CD14-positive monocyte (primary cell): ENCODE measurements at regions of chr12 and their contacts with region 1.

Region 1: GRCh38 chr12:56224102-56224701 is at the start of gene NABP2:
- DNase-seq: peak; percentile 87 to 96 (median 95)
- H3K4me3 ChIP-seq: peak within 1 kb of the TSS; percentile 40 to 96 (median 40)
- H3K4me3 Mint-ChIP-seq: peak within 1 kb of the TSS; percentile 76 to 85
- H3K27ac ChIP-seq: peak within 1 kb of the TSS in 1 of 2 donors; percentile 94
- H3K27ac Mint-ChIP-seq: peak within 1 kb of the TSS; percentile 89 to 99 (median 92)
- H3K4me1 ChIP-seq: peaks cover 44 to 48% of the 10 kb centered on the region in 2 donors
- H3K4me1 Mint-ChIP-seq: peaks cover 42% of the 10 kb centered on the region
- H3K27me3 ChIP-seq: no peaks in the 10 kb centered on the region
- H3K27me3 Mint-ChIP-seq: no peaks in the 10 kb centered on the region
- CTCF ChIP-seq: peak; percentile 90
- polyA plus RNA-seq, gene NABP2: 2.7 to 10.1 (median 3.2) TPM

Region 2: GRCh38 chr12:56158029-56158925 is 65.9 kb before region 1 on chr12 and contains the start of gene MYL6:
- intact Hi-C with region 1: loop called in 1 of 2 experiments (anchors 2 kb)
- DNase-seq: peak; percentile 94 to 98 (median 97)
- H3K4me3 ChIP-seq: peak within 1 kb of the TSS; percentile 77 to 96 (median 84)
- H3K4me3 Mint-ChIP-seq: peak within 1 kb of the TSS; percentile 97 to 99
- H3K27ac ChIP-seq: peak within 1 kb of the TSS; percentile 90 to 94
- H3K27ac Mint-ChIP-seq: peak within 1 kb of the TSS; percentile 97 to 99 (median 98)
- H3K4me1 ChIP-seq: peaks cover 35 to 44% of the 10 kb centered on the region in 2 donors
- H3K4me1 Mint-ChIP-seq: peaks cover 38% of the 10 kb centered on the region
- H3K27me3 ChIP-seq: no peaks in the 10 kb centered on the region
- H3K27me3 Mint-ChIP-seq: peaks cover 0 to 3% (median 2%) of the 10 kb centered on the region in 3 donors
- CTCF ChIP-seq: no peak
- polyA plus RNA-seq, gene MYL6: 1,962 to 3,939 (median 3,189) TPM

Region 3: DNA sequence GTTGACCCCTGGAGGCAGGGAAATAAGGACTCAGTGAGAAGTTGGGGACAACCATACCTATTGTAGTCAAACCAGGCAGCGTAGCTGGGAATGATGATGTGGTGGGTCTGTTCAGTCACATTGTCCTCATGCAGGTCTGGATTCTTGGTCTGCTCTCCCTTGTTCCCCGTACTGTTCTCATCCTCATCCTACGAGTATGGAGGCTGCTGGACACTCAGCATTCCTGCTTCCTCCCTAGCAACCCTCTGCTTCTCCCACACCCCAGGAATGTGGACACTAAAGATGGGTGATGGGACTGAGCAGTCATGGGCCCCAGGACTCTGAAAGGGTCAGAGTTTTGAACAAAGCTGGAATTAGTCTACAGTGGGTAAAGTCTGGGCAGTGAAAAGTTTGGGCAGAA is 45.9 kb before region 1 on chr12:
- intact Hi-C with region 1: no loop called
- DNase-seq: no peak
- H3K4me3 ChIP-seq: no peak overlapping the region
- H3K4me3 Mint-ChIP-seq: no peak overlapping the region
- H3K27ac ChIP-seq: no peak overlapping the region
- H3K27ac Mint-ChIP-seq: peak overlapping the region in 1 of 7 donors; percentile 15
- H3K4me1 ChIP-seq: peaks cover 13 to 14% of the 10 kb centered on the region in 2 donors
- H3K4me1 Mint-ChIP-seq: peaks cover 16% of the 10 kb centered on the region
- H3K27me3 ChIP-seq: no peaks in the 10 kb centered on the region
- H3K27me3 Mint-ChIP-seq: no peaks in the 10 kb centered on the region
- CTCF ChIP-seq: no peak

Region 4: GRCh38 chr12:56299853-56300643 is 75.8 kb after region 1 on chr12 and contains the start of gene CS:
- intact Hi-C with region 1: no loop called
- DNase-seq: peak; percentile 97 to 98 (median 98)
- H3K4me3 ChIP-seq: peak within 1 kb of the TSS; percentile 61 to 84 (median 66)
- H3K4me3 Mint-ChIP-seq: peak within 1 kb of the TSS; percentile 93 to 98
- H3K27ac ChIP-seq: peak within 1 kb of the TSS; percentile 84 to 95
- H3K27ac Mint-ChIP-seq: peak within 1 kb of the TSS; percentile 94 to 97 (median 97)
- H3K4me1 ChIP-seq: peaks cover 41 to 49% of the 10 kb centered on the region in 2 donors
- H3K4me1 Mint-ChIP-seq: peaks cover 50% of the 10 kb centered on the region
- H3K27me3 ChIP-seq: no peaks in the 10 kb centered on the region
- H3K27me3 Mint-ChIP-seq: peaks cover 0 to 2% (median 0%) of the 10 kb centered on the region in 3 donors
- CTCF ChIP-seq: no peak
- polyA plus RNA-seq, gene CS: 55.7 to 156 (median 86.1) TPM

Region 5: DNA sequence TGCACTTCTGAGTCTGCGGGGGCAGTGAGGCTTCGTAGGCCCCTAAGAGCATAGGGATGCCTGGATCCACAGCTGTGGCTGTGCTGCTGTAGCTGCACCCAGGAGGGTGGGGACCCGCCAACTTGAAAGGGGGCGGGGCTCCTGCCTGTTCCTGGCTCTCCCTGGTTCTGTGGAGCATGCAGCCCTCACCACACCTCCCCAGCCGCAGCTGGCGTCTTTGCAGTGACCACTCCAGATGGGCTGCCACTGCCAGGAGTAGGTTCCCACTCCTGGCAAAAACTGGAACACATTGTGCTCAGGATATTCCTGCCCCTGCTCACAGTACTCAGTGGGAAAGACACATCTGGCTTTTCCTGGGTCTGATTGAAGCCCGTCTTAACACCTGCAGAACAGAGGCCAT is 189.2 kb after region 1 on chr12:
- intact Hi-C with region 1: no loop called
- DNase-seq: no peak
- H3K4me3 ChIP-seq: no peak overlapping the region
- H3K4me3 Mint-ChIP-seq: no peak overlapping the region
- H3K27ac ChIP-seq: no peak overlapping the region
- H3K27ac Mint-ChIP-seq: no peak overlapping the region
- H3K4me1 ChIP-seq: no peaks in the 10 kb centered on the region
- H3K4me1 Mint-ChIP-seq: no peaks in the 10 kb centered on the region
- H3K27me3 ChIP-seq: no peaks in the 10 kb centered on the region
- H3K27me3 Mint-ChIP-seq: peaks cover 0 to 3% (median 0%) of the 10 kb centered on the region in 3 donors
- CTCF ChIP-seq: no peak